WTC11 (cell line): ENCODE measurements at regions of chr7 and their contacts with region 1.

Region 1: GRCh38 chr7:73342645-73343044 is 14.7 kb downstream of the FKBP6 start:
- DNase-seq: no peak
- ATAC-seq: peak; percentile 69
- H3K4me3 Mint-ChIP-seq: no peak overlapping the region
- H3K27ac Mint-ChIP-seq: peak overlapping the region; percentile 5
- H3K4me1 Mint-ChIP-seq: peaks cover 40% of the 10 kb centered on the region
- H3K27me3 Mint-ChIP-seq: no peaks in the 10 kb centered on the region; the same call in 1 of the 2 replicates
- CTCF ChIP-seq: no peak

Region 2: DNA sequence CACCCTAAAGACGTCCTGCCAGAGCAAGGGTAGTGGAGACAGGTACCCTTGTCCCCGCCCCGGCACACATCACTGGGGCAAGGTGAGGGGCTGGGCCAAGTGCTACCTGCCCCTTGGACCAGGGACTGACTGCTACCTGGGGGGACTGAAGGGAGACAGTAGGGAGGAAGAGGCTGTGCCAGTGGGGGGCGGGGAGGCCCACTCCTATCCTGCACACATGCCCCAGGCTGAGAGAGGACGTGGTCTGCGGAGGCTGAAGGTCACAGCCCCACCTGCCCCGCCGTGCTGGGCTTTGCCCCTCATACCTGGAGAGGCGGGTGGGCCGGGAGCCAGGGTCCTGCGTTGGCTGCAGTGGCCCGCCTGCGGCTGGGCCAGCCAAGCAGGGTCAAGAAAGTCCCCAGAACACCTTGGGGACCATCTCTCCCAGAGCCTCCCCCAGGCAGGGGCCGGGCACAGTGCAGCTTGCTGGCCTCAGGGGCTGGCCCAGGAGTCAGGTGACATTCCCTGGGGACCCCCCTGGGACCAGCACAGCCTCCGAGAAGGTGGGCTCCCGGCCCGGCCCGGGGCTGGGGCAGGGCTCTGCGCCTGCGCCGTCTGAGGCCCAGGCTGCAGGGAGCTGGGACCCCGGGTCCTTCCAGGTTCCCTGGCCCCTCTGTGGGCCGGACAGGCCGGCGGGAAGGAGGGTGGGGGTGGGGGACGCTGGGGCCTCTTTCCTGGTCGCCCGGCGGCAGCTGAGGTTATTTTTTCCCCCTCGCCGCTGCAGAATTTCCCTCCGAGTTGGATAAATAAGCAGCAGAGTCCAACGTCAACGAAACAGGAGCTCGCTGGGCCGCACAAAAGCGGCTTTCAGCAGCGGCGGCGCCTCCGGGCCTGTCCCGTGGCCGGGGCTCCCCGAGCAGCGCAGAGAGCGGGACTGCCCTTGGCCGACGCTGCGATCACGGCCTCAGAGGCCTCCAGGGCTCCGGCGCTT is 81.2 kb after region 1 on chr7:
- CTCF ChIA-PET with region 1: interaction called, 22 read pairs
- POLR2A ChIA-PET with region 1: interaction called, 3 read pairs
- DNase-seq: peak; percentile 59
- ATAC-seq: peak; percentile 81
- H3K4me3 Mint-ChIP-seq: peak overlapping the region; percentile 37
- H3K27ac Mint-ChIP-seq: no peak overlapping the region
- H3K4me1 Mint-ChIP-seq: peaks cover 3% of the 10 kb centered on the region; the same call in 1 of the 2 replicates
- H3K27me3 Mint-ChIP-seq: no peaks in the 10 kb centered on the region
- CTCF ChIP-seq: no peak

Region 3: DNA sequence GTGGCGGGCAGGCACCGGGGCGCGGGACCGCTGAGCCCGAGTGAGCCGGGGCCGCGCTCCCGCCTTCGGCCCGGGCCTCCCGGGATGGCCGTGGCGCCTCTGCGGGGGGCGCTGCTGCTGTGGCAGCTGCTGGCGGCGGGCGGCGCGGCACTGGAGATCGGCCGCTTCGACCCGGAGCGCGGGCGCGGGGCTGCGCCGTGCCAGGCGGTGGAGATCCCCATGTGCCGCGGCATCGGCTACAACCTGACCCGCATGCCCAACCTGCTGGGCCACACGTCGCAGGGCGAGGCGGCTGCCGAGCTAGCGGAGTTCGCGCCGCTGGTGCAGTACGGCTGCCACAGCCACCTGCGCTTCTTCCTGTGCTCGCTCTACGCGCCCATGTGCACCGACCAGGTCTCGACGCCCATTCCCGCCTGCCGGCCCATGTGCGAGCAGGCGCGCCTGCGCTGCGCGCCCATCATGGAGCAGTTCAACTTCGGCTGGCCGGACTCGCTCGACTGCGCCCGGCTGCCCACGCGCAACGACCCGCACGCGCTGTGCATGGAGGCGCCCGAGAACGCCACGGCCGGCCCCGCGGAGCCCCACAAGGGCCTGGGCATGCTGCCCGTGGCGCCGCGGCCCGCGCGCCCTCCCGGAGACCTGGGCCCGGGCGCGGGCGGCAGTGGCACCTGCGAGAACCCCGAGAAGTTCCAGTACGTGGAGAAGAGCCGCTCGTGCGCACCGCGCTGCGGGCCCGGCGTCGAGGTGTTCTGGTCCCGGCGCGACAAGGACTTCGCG is 91.5 kb after region 1 on chr7:
- CTCF ChIA-PET with region 1: interaction called, 22 read pairs
- POLR2A ChIA-PET with region 1: interaction called, 4 read pairs
- DNase-seq: peak; percentile 62
- ATAC-seq: peak; percentile 13
- H3K4me3 Mint-ChIP-seq: peak overlapping the region; percentile 47
- H3K27ac Mint-ChIP-seq: no peak overlapping the region
- H3K4me1 Mint-ChIP-seq: peaks cover 4% of the 10 kb centered on the region; the same call in 1 of the 2 replicates
- H3K27me3 Mint-ChIP-seq: peaks cover 14% of the 10 kb centered on the region
- CTCF ChIP-seq: no peak